H1 (cell line): ENCODE measurements at regions of chr7 and their contacts with region 1.

Region 1: DNA sequence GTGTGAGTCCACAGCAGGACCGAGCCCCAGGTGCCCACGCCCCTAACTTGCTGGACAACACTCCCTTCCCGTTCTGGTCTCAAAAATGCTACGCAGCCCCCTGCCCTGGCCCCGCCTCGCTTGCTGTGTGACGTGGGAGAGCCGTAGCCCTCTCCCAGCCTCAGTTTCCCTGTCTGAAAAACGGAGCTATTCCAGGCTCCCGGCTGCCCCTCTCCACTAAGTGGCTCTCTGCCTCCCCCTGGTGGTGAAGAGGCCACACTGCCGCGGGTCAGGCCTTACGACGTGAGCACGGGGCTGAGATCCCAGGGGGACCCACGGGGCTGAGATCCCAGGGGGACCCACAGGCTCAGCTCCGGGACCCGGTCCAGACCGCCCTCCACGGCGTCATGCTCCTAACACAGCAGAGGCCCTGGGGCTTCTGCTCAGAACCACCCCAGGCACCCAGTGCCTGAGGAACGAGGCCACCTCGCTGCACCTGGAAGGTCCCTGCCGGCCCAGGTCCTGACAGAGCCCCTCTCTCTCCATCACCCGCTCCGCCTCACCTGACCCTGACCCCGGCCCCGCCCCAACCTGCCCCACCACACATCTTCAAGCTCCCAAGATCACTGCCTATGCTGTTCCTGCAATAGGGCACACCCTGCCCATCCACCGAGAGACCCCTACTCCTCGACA is 26.7 kb downstream of the MICALL2 start:
- DNase-seq: peak in 1 of 2 experiments; percentile 97
- H3K4me3 ChIP-seq: peak overlapping the region in 1 of 4 experiments; percentile 41; a peak in 1 of 8 replicates
- H3K27ac ChIP-seq: no peak overlapping the region
- H3K4me1 ChIP-seq: peaks cover 0 to 10% (median 5%) of the 10 kb centered on the region in 4 experiments; a peak in 5 of 7 replicates
- H3K27me3 ChIP-seq: no peaks in the 10 kb centered on the region
- CTCF ChIP-seq: peak in 2 of 3 experiments; percentile 93 to 95; a peak in 3 of 4 replicates
- EP300 ChIP-seq: no peak
- POLR2A ChIP-seq: no peak
- RAD21 ChIP-seq: peak; percentile 80 to 91

Region 2: DNA sequence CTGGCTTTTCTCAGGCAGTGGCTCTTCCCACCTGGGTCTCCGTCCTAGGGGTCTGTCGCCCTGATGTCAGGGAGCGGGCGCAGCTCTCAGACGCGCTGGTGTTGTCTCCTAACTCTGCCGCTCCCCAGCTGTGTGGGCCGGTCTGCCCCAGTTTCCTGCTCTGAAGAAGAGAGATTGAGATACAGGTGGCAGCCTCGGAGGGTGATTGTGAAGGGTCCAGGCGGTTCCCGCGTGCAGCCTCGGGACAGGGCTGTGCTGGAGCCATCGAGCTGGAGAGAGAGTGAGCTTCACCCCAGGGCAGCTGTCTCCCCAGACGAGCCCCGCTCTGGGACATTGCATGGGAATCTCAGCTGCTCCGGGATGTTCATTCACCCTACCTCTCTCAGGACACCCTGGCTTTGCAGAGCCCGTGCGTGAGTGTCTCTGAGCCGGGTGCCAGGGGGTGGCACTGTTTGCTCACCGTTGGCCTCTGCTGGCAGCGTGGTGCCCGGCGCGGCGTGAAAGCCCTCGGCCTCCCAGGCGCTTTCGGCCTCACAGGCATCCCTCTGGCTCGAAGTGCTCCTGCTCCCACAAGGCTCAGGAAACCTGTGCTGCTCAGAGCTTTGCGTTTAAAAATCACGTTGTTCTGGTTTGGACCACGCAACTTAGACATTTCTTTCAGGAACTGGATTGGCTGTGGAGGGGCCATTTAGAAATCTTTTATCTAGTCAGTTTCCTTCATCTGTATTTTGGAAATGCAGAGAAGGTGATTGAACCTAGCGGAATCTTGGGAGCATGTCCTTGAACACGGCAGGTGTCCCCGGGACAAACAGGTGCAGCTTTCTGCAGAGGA is 238.7 kb before region 1 on chr7:
- CTCF ChIA-PET with region 1: interaction called, 11 read pairs
- POLR2A ChIA-PET with region 1: no interaction called
- DNase-seq: peak in 1 of 2 experiments; percentile 78
- H3K4me3 ChIP-seq: no peak overlapping the region
- H3K27ac ChIP-seq: no peak overlapping the region
- H3K4me1 ChIP-seq: no peaks in the 10 kb centered on the region
- H3K27me3 ChIP-seq: no peaks in the 10 kb centered on the region
- CTCF ChIP-seq: peak; percentile 75 to 82 (median 76)
- EP300 ChIP-seq: no peak
- POLR2A ChIP-seq: no peak
- RAD21 ChIP-seq: peak; percentile 88 to 89

Region 3: GRCh38 chr7:1403638-1404459 is 28.7 kb before region 1 on chr7:
- CTCF ChIA-PET with region 1: interaction called, 15 read pairs
- POLR2A ChIA-PET with region 1: no interaction called
- DNase-seq: no peak
- H3K4me3 ChIP-seq: peak overlapping the region; percentile 0 to 57 (median 30); a peak in 7 of 8 replicates
- H3K27ac ChIP-seq: no peak overlapping the region
- H3K4me1 ChIP-seq: peaks cover 0 to 6% (median 2%) of the 10 kb centered on the region in 4 experiments; a peak in 4 of 7 replicates
- H3K27me3 ChIP-seq: peaks cover 0 to 25% (median 14%) of the 10 kb centered on the region in 4 experiments; a peak in 5 of 7 replicates
- CTCF ChIP-seq: no peak
- EP300 ChIP-seq: no peak
- POLR2A ChIP-seq: no peak
- RAD21 ChIP-seq: no peak

Region 4: DNA sequence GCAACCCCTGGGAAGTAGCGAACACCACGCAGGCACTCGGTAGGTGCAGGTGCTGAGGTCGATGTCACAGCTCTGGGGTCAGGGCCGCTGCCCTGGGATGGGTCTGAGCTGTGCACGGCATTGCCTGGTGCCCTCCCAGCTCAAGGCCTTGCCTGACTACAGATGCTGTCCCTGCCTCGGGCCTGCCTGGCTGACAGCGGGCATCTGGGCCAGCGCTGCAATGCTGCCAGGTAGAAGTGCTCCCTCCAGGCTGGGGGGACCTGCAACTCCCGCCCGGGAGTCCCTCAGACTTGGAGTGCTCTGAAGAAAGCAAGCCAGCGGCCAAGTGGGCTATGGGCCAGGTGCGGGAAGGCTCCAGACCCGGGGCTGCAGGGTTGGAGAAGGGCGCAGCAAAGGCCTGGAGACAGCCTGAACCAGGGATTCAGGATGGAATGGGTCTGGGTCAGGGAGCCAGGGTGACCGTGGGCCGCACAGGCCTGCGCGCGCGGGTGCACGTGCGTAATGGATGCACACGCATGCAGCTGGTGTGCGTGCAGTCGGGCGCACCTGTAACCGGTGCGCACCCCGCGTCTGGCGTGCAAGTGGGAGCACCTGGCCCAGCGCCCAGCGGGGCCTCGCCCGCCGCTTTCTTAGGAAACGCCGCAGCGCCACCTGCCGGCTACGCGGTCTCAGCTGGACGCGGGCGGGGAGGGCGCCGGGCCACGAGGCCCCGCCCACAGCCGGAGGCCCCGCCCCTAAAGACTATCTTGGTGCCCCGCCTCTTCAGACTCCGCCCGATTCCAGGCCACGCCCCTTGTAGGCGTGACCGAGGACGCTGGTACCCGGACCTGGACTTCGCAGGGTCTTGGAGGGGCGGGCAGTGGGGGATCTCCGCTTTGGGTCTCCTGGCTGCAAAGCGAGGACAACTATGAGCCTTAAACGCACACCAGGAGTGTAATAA is 20.0 kb before region 1 on chr7:
- CTCF ChIA-PET with region 1: interaction called, 21 read pairs
- POLR2A ChIA-PET with region 1: no interaction called
- DNase-seq: peak; percentile 70 to 99
- H3K4me3 ChIP-seq: peak overlapping the region in 3 of 4 experiments; percentile 14 to 42 (median 23); a peak in 5 of 8 replicates
- H3K27ac ChIP-seq: no peak overlapping the region
- H3K4me1 ChIP-seq: peaks cover 0 to 3% (median 1%) of the 10 kb centered on the region in 4 experiments; a peak in 4 of 7 replicates
- H3K27me3 ChIP-seq: peaks cover 0 to 9% (median 8%) of the 10 kb centered on the region in 4 experiments; a peak in 4 of 7 replicates
- CTCF ChIP-seq: peak in 2 of 3 experiments; percentile 83 to 86; a peak in 3 of 4 replicates
- EP300 ChIP-seq: no peak; a peak in 1 of 3 replicates
- POLR2A ChIP-seq: no peak
- RAD21 ChIP-seq: peak; percentile 87 to 90

Region 5: DNA sequence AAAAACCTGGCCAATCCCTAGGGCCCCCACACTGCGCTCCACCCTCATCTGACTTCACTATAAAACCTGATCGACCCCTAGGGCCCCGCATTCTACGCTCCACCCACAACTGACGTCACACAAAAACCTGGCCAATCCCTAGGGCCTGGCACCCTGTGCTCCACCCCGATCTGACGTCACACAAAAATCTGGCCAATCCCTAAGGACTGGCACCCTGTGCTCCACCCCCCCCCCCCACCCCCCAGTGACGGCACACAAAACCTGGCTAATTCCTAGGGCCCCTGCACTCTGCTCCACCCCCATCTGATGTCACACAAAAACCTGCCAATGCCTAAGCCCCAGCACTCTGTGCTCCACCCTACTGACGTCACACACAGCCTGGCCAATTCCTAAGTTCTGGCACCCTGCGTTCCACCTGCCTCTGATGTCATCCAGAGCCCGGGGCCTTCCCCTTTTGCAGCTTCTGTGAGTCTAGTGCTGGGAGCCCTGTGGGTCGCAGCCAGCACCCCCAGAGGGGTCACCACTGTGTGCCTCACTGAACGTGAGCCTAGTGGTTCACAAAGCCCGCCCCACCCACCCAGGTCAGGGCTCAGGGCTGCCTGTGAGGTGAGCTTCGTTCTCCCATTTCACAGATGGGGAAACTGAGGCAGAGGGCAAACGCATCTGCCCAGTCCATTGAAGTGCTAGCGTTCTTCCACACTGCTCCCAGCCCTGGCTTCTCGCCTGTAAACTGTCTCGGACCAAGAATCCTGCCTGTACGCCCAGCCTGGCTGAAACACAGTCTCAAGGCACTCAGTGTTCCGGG is 13.8 kb before region 1 on chr7:
- CTCF ChIA-PET with region 1: interaction called, 21 read pairs
- POLR2A ChIA-PET with region 1: interaction called, 3 read pairs
- DNase-seq: peak; percentile 43 to 73
- H3K4me3 ChIP-seq: no peak overlapping the region
- H3K27ac ChIP-seq: no peak overlapping the region
- H3K4me1 ChIP-seq: peaks cover 0 to 6% (median 2%) of the 10 kb centered on the region in 4 experiments; a peak in 4 of 7 replicates
- H3K27me3 ChIP-seq: no peaks in the 10 kb centered on the region
- CTCF ChIP-seq: no peak
- EP300 ChIP-seq: 0 out of 3 replicates have a peak, but pooled peaks of 1 of the 2 experiments have one; percentile 20
- POLR2A ChIP-seq: no peak
- RAD21 ChIP-seq: no peak

Region 6: DNA sequence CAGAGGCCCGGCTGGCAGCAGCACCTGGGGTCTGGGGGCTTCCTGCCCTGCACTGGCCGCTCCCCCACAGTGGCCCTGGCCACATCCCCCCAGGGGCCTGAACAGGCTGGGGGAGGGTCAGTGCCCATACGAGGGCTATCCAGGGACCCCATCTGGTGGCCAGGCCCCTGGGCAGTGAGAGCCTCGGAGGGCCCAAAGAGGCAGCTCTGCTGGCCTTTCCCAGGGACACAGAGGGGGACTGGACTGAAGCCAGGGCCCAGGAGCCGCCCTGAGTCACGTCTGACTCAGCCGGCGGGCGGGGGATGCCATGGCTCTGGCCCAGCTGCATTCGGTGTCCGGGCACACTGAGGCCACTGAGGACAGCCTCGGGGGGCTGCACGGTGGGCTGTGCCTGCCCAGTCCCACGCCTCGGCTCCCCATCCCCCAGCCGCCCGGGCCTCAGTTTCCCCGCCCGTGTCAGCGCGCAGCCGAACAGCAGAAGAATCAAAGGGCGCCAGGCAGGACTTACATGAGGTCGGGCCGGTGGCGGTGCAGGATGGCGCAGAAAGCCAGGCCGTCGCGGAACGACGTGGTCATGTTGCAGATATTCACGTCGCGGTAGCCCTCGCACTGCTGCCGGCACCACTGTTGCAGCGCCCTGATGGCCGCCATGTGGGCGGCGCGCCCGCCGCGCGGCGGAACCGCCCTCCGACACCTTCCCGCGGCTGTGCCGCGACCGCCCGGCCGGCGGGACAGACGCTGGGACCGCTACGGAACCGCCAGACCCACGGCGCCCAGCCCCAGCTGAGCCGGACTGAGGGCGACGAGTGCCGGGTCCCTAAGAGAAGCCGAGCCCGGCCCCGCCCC is 26.4 kb after region 1 on chr7 and contains the start of gene MICALL2:
- CTCF ChIA-PET with region 1: interaction called, 35 read pairs
- POLR2A ChIA-PET with region 1: interaction called, 5 read pairs
- DNase-seq: no peak
- H3K4me3 ChIP-seq: peak within 1 kb of the TSS; percentile 68 to 77 (median 72)
- H3K27ac ChIP-seq: no peak within 1 kb of the TSS
- H3K4me1 ChIP-seq: peaks cover 0 to 24% (median 14%) of the 10 kb centered on the region in 4 experiments; a peak in 6 of 7 replicates
- H3K27me3 ChIP-seq: no peaks in the 10 kb centered on the region
- CTCF ChIP-seq: no peak
- EP300 ChIP-seq: no peak
- POLR2A ChIP-seq: peak in 1 of 2 experiments; percentile 83; a peak in 2 of 3 replicates
- RAD21 ChIP-seq: no peak
- total RNA-seq, gene MICALL2: 7.7 and 8.5 TPM in 2 replicates

Region 7: DNA sequence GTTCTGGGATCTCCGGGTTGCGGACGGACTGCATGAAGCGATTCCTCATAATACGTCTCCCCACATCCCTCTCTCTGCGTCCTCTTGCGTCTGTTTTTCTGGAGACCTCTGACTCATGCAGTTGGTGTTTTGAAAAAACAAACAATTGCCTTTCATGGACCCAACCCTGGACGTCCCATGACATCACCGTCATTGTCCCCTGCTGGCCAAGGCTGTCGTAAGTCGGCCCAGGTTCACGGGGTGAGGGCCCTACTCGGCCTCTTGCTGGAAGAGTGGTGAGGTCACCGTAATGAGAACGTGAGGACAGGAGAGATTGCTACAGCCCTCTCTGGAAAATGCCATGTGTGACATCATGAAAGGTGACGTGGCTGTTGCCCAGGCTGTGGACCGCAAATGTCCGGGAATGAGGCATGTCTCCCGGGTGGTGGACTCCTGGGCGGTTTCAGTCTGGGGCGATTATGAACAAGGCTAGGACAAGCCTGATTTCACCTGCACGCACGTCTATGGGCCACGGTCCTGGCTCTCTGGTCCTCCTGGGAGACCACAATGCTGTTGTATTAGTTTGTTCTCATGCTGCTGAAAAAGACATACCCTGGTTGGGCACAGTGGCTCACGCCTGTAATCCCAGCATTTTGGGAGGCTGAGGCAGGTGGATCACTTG is 88.2 kb after region 1 on chr7:
- CTCF ChIA-PET with region 1: no interaction called
- POLR2A ChIA-PET with region 1: no interaction called
- DNase-seq: no peak
- H3K4me3 ChIP-seq: no peak overlapping the region
- H3K27ac ChIP-seq: no peak overlapping the region
- H3K4me1 ChIP-seq: peaks cover 0 to 11% (median 3%) of the 10 kb centered on the region in 4 experiments; a peak in 4 of 7 replicates
- H3K27me3 ChIP-seq: no peaks in the 10 kb centered on the region
- CTCF ChIP-seq: no peak
- EP300 ChIP-seq: no peak
- POLR2A ChIP-seq: no peak
- RAD21 ChIP-seq: no peak